ENCODE measurements at regions of chr1 and their contacts with region 1.

Region 1: GRCh38 chr1:182084487-182085316 is 23.2 kb upstream of the ZNF648 start:
- DNase-seq: peak; percentile 63 to 82
- ATAC-seq: peak; percentile 92 to 96
- H3K4me3 ChIP-seq: no peak overlapping the region
- H3K27ac ChIP-seq: peak overlapping the region in 2 of 4 donors; percentile 12 to 50
- H3K4me1 ChIP-seq: peaks cover 0 to 3% of the 10 kb centered on the region in 2 donors
- H3K27me3 ChIP-seq: no peaks in the 10 kb centered on the region
- CTCF ChIP-seq: peak; percentile 80 to 97 (median 89)
- POLR2A ChIP-seq: no peak

Region 2: DNA sequence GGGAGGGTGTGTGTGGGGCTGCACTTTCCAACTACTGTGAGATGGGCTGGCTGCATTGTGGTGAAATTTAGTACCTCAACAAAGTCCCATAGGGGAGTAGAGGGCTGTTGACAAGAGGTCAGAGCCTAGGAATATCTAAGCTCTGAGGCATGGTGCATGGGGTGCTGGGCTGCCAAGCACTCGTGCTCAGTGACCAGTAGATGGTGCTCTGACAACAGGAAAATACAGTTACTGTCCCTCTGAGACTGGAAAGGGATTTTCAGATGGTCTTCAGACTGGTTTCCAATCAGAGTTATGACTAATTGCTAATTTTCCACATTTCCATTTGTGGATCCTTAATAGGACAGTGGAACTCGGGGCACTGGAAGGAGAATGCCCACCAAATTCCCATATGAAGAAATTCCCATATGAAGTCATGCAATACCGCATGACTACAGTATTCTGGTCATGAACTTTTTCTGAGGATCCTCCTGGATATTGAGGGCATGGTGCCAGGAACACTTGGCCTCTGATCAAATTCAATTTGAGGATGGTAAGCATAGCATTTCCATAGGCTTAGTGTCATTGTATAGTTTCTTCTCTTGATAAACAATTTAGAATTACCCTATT is 605.5 kb before region 1 on chr1:
- in situ Hi-C with region 1: loop called in 1 of 4 experiments (anchors 10 kb)
- intact Hi-C with region 1: loop called (anchors 2 kb)
- DNase-seq: peak in 1 of 2 donors; percentile 19
- ATAC-seq: peak; percentile 74
- H3K4me3 ChIP-seq: no peak overlapping the region
- H3K27ac ChIP-seq: no peak overlapping the region
- H3K4me1 ChIP-seq: no peaks in the 10 kb centered on the region
- H3K27me3 ChIP-seq: peaks cover 29 to 31% (median 30%) of the 10 kb centered on the region in 3 donors
- CTCF ChIP-seq: peak; percentile 55 to 76 (median 67)
- POLR2A ChIP-seq: no peak

Region 3: DNA sequence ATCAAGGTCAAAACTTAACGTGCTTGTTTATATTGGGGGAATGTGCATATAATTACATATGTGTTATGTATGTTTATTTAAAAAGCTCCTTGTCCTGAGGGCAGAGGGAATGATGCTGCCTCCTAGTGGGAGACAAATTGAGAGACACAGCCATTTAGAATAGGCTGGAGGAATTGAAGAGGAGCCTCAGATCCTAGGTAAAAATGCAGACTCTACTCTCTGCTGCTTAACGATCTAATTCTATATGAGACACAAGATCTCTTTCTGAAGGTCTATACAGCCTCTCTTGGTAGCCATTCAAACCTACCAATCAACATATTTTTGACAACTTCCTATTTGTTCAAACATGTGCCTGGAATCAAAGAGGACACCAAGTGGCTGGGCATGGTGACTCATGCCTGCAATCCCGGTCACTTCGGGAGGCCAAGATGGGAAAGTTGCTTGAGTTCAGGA is 113.4 kb after region 1 on chr1:
- in situ Hi-C with region 1: no loop called
- intact Hi-C with region 1: loop called (anchors 5 kb)
- DNase-seq: peak in 1 of 2 donors; percentile 36
- ATAC-seq: no peak
- H3K4me3 ChIP-seq: no peak overlapping the region
- H3K27ac ChIP-seq: peak overlapping the region; percentile 64 to 83 (median 74)
- H3K4me1 ChIP-seq: peaks cover 21 to 35% of the 10 kb centered on the region in 2 donors
- H3K27me3 ChIP-seq: no peaks in the 10 kb centered on the region
- CTCF ChIP-seq: peak in 3 of 5 experiments; percentile 19 to 36 (median 27)
- POLR2A ChIP-seq: no peak

Region 4: DNA sequence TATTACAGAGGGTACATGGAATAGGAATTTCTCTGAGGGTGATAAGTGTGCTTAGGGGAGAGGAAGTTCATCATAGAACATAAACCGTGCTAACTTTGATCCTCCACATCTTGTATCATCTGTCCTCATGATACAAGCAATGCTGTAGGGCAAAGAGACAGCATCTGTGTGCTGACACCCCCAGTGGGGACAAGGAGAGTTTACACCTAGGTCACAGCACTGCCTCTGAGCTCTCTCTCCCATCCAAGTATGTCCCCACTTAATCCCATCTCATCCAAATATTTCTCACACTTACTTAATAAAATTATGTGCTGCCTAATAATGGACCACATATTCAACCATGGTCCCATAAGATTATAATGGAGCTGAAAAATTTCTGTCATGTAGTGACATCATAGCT is 320.1 kb after region 1 on chr1:
- in situ Hi-C with region 1: loop called (anchors 5 kb)
- intact Hi-C with region 1: no loop called
- DNase-seq: no peak
- ATAC-seq: no peak
- H3K4me3 ChIP-seq: no peak overlapping the region
- H3K27ac ChIP-seq: no peak overlapping the region
- H3K4me1 ChIP-seq: no peaks in the 10 kb centered on the region
- H3K27me3 ChIP-seq: no peaks in the 10 kb centered on the region
- CTCF ChIP-seq: no peak
- POLR2A ChIP-seq: no peak

Region 5: DNA sequence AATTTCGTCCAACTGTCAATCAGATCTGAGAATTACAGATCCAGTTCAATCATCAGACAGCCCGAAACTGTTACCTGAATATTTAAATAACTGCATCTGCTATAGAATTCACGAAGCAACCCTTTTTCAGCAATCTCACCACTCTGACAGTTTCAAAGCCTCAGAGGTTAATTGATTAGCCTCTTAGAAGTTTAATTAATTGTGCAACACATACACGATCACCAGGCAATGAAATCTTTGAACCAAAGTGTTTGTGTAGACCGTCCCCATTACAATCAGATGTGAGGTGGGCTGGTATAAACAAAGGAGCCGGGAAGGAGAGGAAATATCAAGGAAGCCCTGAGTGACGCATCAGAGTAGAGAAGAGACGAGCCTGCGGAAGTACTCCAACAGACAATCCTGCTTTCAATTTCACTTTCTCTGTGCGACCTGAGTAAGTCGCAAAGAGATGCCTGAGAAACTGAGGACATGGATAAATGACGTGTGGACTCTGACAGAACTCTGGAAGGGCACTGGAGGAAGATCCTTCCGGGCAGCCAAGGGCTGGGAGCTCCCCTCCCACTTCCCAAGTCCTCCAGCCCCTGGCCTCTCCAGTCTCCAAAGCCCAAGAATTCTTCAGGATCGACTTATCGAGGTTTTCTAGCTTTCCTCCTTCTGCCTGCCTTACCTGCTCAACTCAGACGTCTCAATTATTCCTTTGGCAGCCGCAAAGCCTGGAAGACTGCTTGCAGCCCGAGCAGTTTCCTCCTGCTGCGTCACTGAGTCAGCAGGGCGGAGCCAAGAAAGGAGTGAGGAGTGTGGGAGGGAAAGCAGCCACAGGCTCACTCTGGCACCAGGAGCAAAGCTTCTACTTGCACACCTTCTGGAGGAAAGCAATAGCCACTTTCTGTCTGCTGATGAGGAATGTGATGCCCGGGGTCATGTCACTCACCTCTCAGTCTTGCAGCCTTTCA is 504.1 kb after region 1 on chr1 and contains the start of gene RNASEL:
- in situ Hi-C with region 1: loop called (anchors 10 to 25 kb)
- intact Hi-C with region 1: no loop called
- DNase-seq: peak in 1 of 2 donors; percentile 58
- ATAC-seq: peak; percentile 79 to 93
- H3K4me3 ChIP-seq: peak within 1 kb of the TSS; percentile 65 to 77 (median 68)
- H3K27ac ChIP-seq: peak within 1 kb of the TSS; percentile 76 to 88 (median 85)
- H3K4me1 ChIP-seq: no peaks in the 10 kb centered on the region
- H3K27me3 ChIP-seq: no peaks in the 10 kb centered on the region
- CTCF ChIP-seq: no peak
- POLR2A ChIP-seq: peak in 1 of 2 donors; percentile 19
- total RNA-seq, gene RNASEL: 0.51 to 4.4 (median 2.4) TPM

Region 6: GRCh38 chr1:182604169-182605164 is 519.8 kb after region 1 on chr1 and contains the start of gene RGS16:
- in situ Hi-C with region 1: loop called in 3 of 4 experiments (anchors 10 to 25 kb)
- intact Hi-C with region 1: loop called (anchors 5 kb)
- DNase-seq: peak; percentile 86 to 90
- ATAC-seq: peak; percentile 85 to 86
- H3K4me3 ChIP-seq: peak within 1 kb of the TSS; percentile 52 to 68 (median 54)
- H3K27ac ChIP-seq: peak within 1 kb of the TSS; percentile 59 to 66 (median 63)
- H3K4me1 ChIP-seq: peaks cover 33 to 36% of the 10 kb centered on the region in 2 donors
- H3K27me3 ChIP-seq: no peaks in the 10 kb centered on the region
- CTCF ChIP-seq: no peak
- POLR2A ChIP-seq: peak; percentile 70 to 92
- total RNA-seq, gene RGS16: 0.41 to 0.98 (median 0.52) TPM in 3 of 4 donors, not detected in the other

Region 7: GRCh38 chr1:182789138-182790076 is 704.7 kb after region 1 on chr1 and contains the start of gene NPL:
- in situ Hi-C with region 1: loop called (anchors 5 to 25 kb)
- intact Hi-C with region 1: loop called (anchors 5 kb)
- DNase-seq: peak; percentile 56 to 78
- ATAC-seq: peak; percentile 91 to 95
- H3K4me3 ChIP-seq: peak within 1 kb of the TSS; percentile 72 to 86 (median 78)
- H3K27ac ChIP-seq: peak within 1 kb of the TSS; percentile 81 to 87 (median 83)
- H3K4me1 ChIP-seq: peaks cover 7 to 9% of the 10 kb centered on the region in 2 donors
- H3K27me3 ChIP-seq: no peaks in the 10 kb centered on the region
- CTCF ChIP-seq: no peak
- POLR2A ChIP-seq: peak; percentile 81 to 97
- total RNA-seq, gene NPL: 2.7 to 6.5 (median 4.3) TPM